WTC11 (cell line): ENCODE measurements at regions of chr16 and their contacts with region 1.

Region 1: DNA sequence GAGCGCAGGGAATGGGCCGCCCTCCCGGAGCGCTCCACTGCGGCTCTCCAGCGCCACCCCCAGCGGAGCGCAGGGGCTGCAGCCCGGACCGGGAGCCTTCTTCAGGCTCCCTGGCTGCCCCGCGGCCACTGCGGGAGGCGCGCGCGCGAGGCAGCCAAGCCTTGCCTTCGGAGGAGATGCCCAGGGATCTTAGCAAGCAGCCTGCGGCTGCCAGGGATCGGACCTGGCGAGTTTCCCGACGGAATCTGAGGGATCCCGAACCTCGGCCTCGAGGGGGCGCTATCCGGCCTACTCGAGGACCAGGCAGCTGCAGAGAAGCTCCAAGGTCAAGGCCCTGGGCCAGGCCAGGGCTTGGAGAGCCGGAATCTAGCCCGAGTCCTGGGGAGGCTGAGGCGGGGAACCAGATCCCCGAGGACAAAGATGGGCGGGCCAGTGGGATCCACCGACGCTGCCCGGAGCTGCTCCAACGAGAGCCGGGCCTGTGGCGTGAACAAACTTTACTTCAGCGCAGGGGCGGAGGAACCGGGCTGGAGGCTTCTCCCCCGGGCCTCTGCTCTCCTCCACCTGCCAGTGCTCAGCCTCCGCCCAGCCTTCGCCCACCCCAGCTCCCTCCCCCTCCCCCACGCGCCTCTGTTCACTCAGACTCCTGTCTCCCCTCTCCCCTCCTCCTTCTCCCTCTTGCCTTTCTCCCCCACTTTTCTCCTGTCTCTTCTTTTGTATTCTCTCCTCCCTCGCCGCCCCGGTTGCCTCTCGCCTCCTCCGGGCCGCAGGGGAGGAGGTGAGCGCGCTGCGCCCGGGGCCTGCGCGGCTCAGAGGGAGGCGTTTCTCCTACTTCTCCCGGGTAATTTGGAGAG is at the start of gene IRX6:
- DNase-seq: peak; percentile 87
- ATAC-seq: peak; percentile 78
- H3K4me3 Mint-ChIP-seq: peak within 1 kb of the TSS; percentile 77
- H3K27ac Mint-ChIP-seq: no peak within 1 kb of the TSS
- H3K4me1 Mint-ChIP-seq: peaks cover 23% of the 10 kb centered on the region
- H3K27me3 Mint-ChIP-seq: peaks cover 88% of the 10 kb centered on the region
- CTCF ChIP-seq: peak; percentile 56
- total RNA-seq, gene IRX6: 0.14 to 0.23 TPM (median 0.22 TPM) in 3 replicates

Region 2: GRCh38 chr16:55294931-55295342 is 28.9 kb before region 1 on chr16:
- CTCF ChIA-PET with region 1: interaction called, 11 read pairs
- POLR2A ChIA-PET with region 1: no interaction called
- DNase-seq: no peak
- ATAC-seq: no peak
- H3K4me3 Mint-ChIP-seq: no peak overlapping the region
- H3K27ac Mint-ChIP-seq: no peak overlapping the region
- H3K4me1 Mint-ChIP-seq: peaks cover 25% of the 10 kb centered on the region
- H3K27me3 Mint-ChIP-seq: no peaks in the 10 kb centered on the region; the same call in 1 of the 2 replicates
- CTCF ChIP-seq: no peak

Region 3: GRCh38 chr16:55338646-55339045 is 14.8 kb after region 1 on chr16:
- CTCF ChIA-PET with region 1: interaction called, 10 read pairs
- POLR2A ChIA-PET with region 1: no interaction called
- DNase-seq: no peak
- ATAC-seq: no peak
- H3K4me3 Mint-ChIP-seq: no peak overlapping the region
- H3K27ac Mint-ChIP-seq: no peak overlapping the region
- H3K4me1 Mint-ChIP-seq: no peaks in the 10 kb centered on the region
- H3K27me3 Mint-ChIP-seq: peaks cover 67% of the 10 kb centered on the region
- CTCF ChIP-seq: no peak

Region 4: GRCh38 chr16:55437625-55438024 is 113.8 kb after region 1 on chr16:
- CTCF ChIA-PET with region 1: no interaction called
- POLR2A ChIA-PET with region 1: no interaction called
- DNase-seq: no peak
- ATAC-seq: no peak
- H3K4me3 Mint-ChIP-seq: no peak overlapping the region
- H3K27ac Mint-ChIP-seq: no peak overlapping the region
- H3K4me1 Mint-ChIP-seq: no peaks in the 10 kb centered on the region
- H3K27me3 Mint-ChIP-seq: no peaks in the 10 kb centered on the region; the same call in none of the 2 replicates
- CTCF ChIP-seq: no peak

Region 5: DNA sequence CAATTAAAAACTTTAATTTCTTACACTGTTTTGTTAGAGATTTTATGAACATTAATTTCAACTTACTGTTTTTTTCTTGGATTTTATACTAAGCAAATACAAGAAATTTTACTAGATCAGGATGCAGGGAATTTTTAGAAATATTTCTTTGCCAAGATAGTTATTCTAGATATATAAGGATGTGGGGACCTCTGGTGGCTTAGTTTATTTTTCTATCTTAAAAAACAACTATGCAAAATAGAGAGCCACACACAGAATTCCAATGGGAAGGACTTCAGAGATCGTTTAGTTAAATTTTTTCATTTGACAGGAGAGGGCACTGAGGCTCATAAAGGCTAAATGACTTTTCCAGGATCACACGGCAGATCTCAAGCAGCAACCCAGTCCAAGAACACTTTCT is 219.6 kb after region 1 on chr16:
- CTCF ChIA-PET with region 1: no interaction called
- POLR2A ChIA-PET with region 1: no interaction called
- DNase-seq: no peak
- ATAC-seq: no peak
- H3K4me3 Mint-ChIP-seq: no peak overlapping the region
- H3K27ac Mint-ChIP-seq: no peak overlapping the region
- H3K4me1 Mint-ChIP-seq: 0 out of 2 replicates have a peak, but pooled peaks cover 4% of the 10 kb centered on the region
- H3K27me3 Mint-ChIP-seq: no peaks in the 10 kb centered on the region
- CTCF ChIP-seq: no peak